ENCODE measurements at regions of chr20 and their contacts with region 1.

Region 1: DNA sequence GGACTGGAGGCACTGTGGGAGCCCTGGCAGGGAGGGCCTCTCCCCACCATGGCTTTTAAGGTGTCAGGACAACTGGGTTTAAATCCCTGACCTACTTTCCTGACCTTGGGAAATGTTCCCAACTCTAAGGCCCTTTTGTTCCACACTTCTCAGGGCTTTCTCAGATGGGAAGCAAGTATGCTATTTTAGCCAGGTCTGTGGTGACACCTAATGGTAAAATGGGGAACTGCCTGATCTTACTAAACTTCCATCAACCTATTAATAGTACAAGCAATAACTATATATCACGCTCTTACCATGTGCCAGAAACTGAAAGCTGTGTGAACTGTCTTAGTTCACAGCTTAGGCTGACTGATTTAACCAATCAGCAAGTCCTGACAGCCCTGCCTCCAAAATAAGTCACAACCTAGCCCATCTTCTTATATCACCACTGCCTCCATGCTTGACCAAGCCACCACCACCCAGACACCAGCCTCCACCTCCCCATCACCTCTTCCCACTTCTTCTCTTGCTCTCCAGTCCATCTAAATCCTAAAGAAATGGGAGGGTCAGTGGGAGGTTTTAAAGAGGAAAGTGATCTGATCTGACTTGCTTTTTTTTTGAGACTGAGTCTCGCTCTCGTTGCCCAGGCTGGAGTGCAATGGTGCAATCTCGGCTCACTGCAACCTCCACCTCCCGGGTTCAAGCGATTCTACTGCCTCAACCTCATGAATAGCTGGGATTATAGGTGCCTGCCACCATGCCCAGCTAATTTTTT is 6.9 kb upstream of the BLCAP start:
- DNase-seq: peak in 6 of 7 donors; percentile 52 to 82 (median 70)
- H3K4me3 ChIP-seq: no peak overlapping the region
- H3K27ac ChIP-seq: no peak overlapping the region
- H3K4me1 ChIP-seq: no peaks in the 10 kb centered on the region
- H3K27me3 ChIP-seq: no peaks in the 10 kb centered on the region
- CTCF ChIP-seq: peak; percentile 65 to 97 (median 90)
- POLR2A ChIP-seq: no peak

Region 2: DNA sequence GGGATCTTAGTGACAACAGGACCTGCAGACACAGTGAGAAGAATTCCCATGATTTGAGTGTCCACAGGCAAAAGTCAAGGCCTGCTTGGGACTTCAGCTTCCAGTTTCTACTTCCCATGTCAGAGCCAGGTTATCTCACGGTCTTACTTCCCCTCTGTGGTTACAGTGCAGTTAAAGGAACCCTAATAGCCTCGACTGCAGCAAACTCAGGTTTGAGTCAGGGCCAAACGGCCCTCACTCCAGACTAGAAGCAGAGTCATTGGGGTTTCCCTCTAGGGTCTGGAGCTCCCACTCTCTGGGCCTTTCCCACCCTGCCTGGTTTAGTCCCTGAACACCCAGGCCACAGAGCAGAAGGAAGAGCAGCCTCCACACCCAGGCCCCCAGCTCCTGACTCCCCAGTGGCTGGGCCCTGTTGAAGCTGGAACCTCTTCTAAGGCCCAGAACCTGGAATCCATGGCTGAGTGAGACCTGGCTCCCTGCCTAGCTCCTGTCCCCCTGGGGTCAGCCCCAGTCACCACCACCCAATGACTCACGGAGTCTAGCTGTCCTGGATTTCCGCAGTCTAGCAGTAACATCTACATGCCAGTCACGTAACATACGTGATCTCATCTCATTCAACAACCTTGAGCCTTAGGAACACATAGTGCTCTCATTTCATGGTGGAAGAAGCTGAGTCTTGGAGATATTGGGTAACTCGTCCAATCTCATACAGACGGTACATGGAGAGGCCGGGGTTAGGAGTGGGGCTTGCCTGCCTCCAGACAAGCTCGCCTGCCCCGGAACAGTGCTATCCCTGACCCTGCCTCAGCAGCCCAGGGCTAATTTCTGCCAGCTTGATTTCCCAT is 263.8 kb before region 1 on chr20:
- intact Hi-C with region 1: loop called (anchors 2 to 5 kb)
- DNase-seq: peak in 1 of 7 donors; percentile 43
- H3K4me3 ChIP-seq: no peak overlapping the region
- H3K27ac ChIP-seq: peak overlapping the region in 1 of 5 donors; percentile 57
- H3K4me1 ChIP-seq: peaks cover 0 to 9% of the 10 kb centered on the region in 2 donors
- H3K27me3 ChIP-seq: no peaks in the 10 kb centered on the region
- CTCF ChIP-seq: no peak
- POLR2A ChIP-seq: no peak